GM12878 (cell line): ENCODE measurements at regions of chr3 and their contacts with region 1.

Region 1: GRCh38 chr3:112333002-112333380 is at the start of gene CD200:
- DNase-seq: no peak
- ATAC-seq: peak; percentile 70
- H3K4me3 ChIP-seq: peak within 1 kb of the TSS; percentile 96
- H3K27ac ChIP-seq: peak within 1 kb of the TSS; percentile 74
- H3K4me1 ChIP-seq: no peaks in the 10 kb centered on the region
- H3K27me3 ChIP-seq: no peaks in the 10 kb centered on the region
- CTCF ChIP-seq: no peak
- EP300 ChIP-seq: no peak
- POLR2A ChIP-seq: peak; percentile 83
- RAD21 ChIP-seq: no peak
- polyA plus RNA-seq, gene CD200: 39.8 to 44.0 TPM

Region 2: DNA sequence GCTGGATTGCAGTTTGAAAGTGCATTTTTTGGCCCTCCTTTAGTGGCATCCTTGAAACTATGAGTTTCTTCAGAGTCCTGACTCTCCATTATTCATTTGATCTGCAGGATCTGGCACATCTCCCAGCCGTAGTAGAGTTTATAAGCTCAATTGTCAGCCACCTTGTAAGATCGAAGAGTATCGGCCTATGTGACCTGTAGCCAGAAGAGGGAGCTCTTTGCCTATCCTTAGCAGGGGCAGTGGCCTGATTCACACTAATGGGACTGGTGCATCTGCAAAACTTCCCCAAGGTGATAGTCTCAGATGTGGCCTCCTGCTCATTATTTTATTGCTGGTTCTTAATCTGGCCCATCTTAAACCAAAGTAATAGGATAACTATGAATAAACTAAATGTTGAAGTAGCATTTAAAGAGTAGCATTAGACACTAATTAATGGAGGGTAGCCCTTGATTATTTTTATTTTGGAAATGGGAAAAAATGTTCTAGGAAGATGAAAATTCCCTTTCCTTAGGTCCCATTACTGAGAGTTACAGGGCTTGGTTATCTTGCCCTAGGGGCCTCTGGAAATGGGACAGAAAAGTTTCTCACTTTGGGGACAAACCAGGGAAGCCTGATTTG is 221.1 kb before region 1 on chr3:
- CTCF ChIA-PET with region 1: interaction called, 25 read pairs
- POLR2A ChIA-PET with region 1: interaction called, 4 read pairs
- RAD21 ChIA-PET with region 1: interaction called, 16 read pairs
- SMC1A ChIA-PET with region 1: interaction called, 13 read pairs
- in situ Hi-C with region 1: no loop called
- intact Hi-C with region 1: no loop called
- DNase-seq: no peak
- ATAC-seq: peak; percentile 59
- H3K4me3 ChIP-seq: no peak overlapping the region
- H3K27ac ChIP-seq: peak overlapping the region; percentile 95
- H3K4me1 ChIP-seq: peaks cover 46% of the 10 kb centered on the region
- H3K27me3 ChIP-seq: no peaks in the 10 kb centered on the region
- CTCF ChIP-seq: peak; percentile 91 to 98 (median 93); a peak in 5 of 6 replicates
- EP300 ChIP-seq: no peak
- POLR2A ChIP-seq: no peak
- RAD21 ChIP-seq: peak; percentile 100

Region 3: GRCh38 chr3:112321867-112322649 is 10.9 kb before region 1 on chr3:
- CTCF ChIA-PET with region 1: interaction called, 33 read pairs
- POLR2A ChIA-PET with region 1: interaction called, 8 read pairs
- RAD21 ChIA-PET with region 1: interaction called, 7 read pairs
- SMC1A ChIA-PET with region 1: interaction called, 21 read pairs
- in situ Hi-C with region 1: no loop called
- intact Hi-C with region 1: no loop called
- DNase-seq: no peak
- ATAC-seq: no peak
- H3K4me3 ChIP-seq: no peak overlapping the region
- H3K27ac ChIP-seq: no peak overlapping the region
- H3K4me1 ChIP-seq: no peaks in the 10 kb centered on the region
- H3K27me3 ChIP-seq: no peaks in the 10 kb centered on the region
- CTCF ChIP-seq: no peak
- EP300 ChIP-seq: no peak
- POLR2A ChIP-seq: no peak
- RAD21 ChIP-seq: no peak

Region 4: DNA sequence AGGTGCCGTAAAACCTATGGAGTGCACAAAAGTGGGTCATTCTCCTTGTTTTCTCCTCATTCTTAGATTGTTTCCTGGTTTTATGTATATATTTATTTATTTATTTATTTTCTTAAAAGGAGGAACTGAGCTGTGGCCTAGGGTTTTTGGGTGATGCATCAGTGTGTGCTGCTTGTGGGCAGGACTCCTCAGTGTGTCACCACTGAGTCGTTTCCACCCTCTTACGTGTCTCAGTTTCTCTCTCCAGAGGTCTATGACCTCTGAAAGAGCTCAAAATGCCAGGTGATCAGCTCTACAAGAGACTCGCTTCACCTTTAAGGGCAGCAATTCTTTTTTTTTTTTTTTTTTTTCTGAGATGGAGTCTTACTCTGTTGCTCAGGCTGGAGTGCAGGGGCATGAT is 72.9 kb after region 1 on chr3:
- CTCF ChIA-PET with region 1: interaction called, 15 read pairs
- POLR2A ChIA-PET with region 1: interaction called, 8 read pairs
- RAD21 ChIA-PET with region 1: interaction called, 57 read pairs
- SMC1A ChIA-PET with region 1: interaction called, 41 read pairs
- in situ Hi-C with region 1: no loop called
- intact Hi-C with region 1: loop called (anchors 2 kb)
- DNase-seq: no peak
- ATAC-seq: peak; percentile 72
- H3K4me3 ChIP-seq: no peak overlapping the region
- H3K27ac ChIP-seq: no peak overlapping the region; the same call in 1 of the 2 replicates
- H3K4me1 ChIP-seq: peaks cover 27% of the 10 kb centered on the region
- H3K27me3 ChIP-seq: no peaks in the 10 kb centered on the region
- CTCF ChIP-seq: no peak
- EP300 ChIP-seq: no peak
- POLR2A ChIP-seq: no peak
- RAD21 ChIP-seq: no peak

Region 5: GRCh38 chr3:112464264-112464663 is 131.3 kb after region 1 on chr3:
- CTCF ChIA-PET with region 1: interaction called, 8 read pairs
- POLR2A ChIA-PET with region 1: interaction called, 7 read pairs
- RAD21 ChIA-PET with region 1: interaction called, 27 read pairs
- SMC1A ChIA-PET with region 1: interaction called, 26 read pairs
- in situ Hi-C with region 1: no loop called
- intact Hi-C with region 1: loop called (anchors 2 kb)
- DNase-seq: peak; percentile 67
- ATAC-seq: peak; percentile 45
- H3K4me3 ChIP-seq: peak overlapping the region; percentile 16; the same call in 1 of the 2 replicates
- H3K27ac ChIP-seq: peak overlapping the region; percentile 77
- H3K4me1 ChIP-seq: peaks cover 61% of the 10 kb centered on the region
- H3K27me3 ChIP-seq: no peaks in the 10 kb centered on the region
- CTCF ChIP-seq: no peak
- EP300 ChIP-seq: peak; percentile 10 to 78; a peak in 2 of 4 replicates
- POLR2A ChIP-seq: no peak
- RAD21 ChIP-seq: no peak

Region 6: GRCh38 chr3:112519424-112520001 is 186.5 kb after region 1 on chr3:
- CTCF ChIA-PET with region 1: interaction called, 15 read pairs
- POLR2A ChIA-PET with region 1: interaction called, 8 read pairs
- RAD21 ChIA-PET with region 1: interaction called, 21 read pairs
- SMC1A ChIA-PET with region 1: interaction called, 56 read pairs
- in situ Hi-C with region 1: no loop called
- intact Hi-C with region 1: no loop called
- DNase-seq: peak; percentile 68
- ATAC-seq: peak; percentile 83
- H3K4me3 ChIP-seq: no peak overlapping the region
- H3K27ac ChIP-seq: peak overlapping the region; percentile 54
- H3K4me1 ChIP-seq: peaks cover 4% of the 10 kb centered on the region; the same call in 1 of the 2 replicates
- H3K27me3 ChIP-seq: no peaks in the 10 kb centered on the region
- CTCF ChIP-seq: peak; percentile 68 to 72 (median 70)
- EP300 ChIP-seq: no peak
- POLR2A ChIP-seq: no peak
- RAD21 ChIP-seq: peak; percentile 92

Region 7: DNA sequence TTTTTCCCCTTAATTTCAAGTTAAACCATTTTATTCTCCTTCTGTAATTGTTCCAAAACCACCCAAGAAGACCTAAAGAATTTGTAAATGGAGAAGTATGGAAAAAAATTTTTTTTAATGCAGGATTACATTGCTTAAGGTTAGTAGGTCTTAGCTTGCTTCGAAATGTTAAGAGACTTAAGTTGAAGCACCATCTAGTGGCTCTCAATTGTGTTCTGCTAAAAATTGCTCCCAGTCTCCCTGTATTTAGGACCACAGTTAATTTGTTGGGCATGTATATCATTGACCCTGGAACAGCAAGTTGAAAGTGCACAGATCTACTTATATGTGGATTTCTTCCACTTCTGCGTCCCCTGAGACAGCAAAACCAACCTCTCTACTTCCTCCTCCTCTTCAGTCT is 481.3 kb after region 1 on chr3:
- CTCF ChIA-PET with region 1: no interaction called
- POLR2A ChIA-PET with region 1: no interaction called
- RAD21 ChIA-PET with region 1: no interaction called
- SMC1A ChIA-PET with region 1: no interaction called
- in situ Hi-C with region 1: no loop called
- intact Hi-C with region 1: no loop called
- DNase-seq: no peak
- ATAC-seq: peak; percentile 29; the same call in 1 of the 3 replicates
- H3K4me3 ChIP-seq: no peak overlapping the region
- H3K27ac ChIP-seq: no peak overlapping the region
- H3K4me1 ChIP-seq: peaks cover 19% of the 10 kb centered on the region
- H3K27me3 ChIP-seq: no peaks in the 10 kb centered on the region
- CTCF ChIP-seq: peak; percentile 1 to 12 (median 10); a peak in 1 of 6 replicates
- EP300 ChIP-seq: no peak
- POLR2A ChIP-seq: no peak
- RAD21 ChIP-seq: peak; percentile 40